Head of caudate nucleus (tissue), 42 donors: ENCODE measurements at regions of chr1 and their contacts with region 1.

Region 1: GRCh38 chr1:245045087-245045881 is 109.5 kb upstream of the KIF26B start:
- DNase-seq: peak in 16 of 42 donors; percentile 17 to 69 (median 35)

Region 2: GRCh38 chr1:244796718-244797406 is 248.4 kb before region 1 on chr1:
- intact Hi-C with region 1: loop called (anchors 5 kb)
- DNase-seq: peak in 40 of 42 donors; percentile 18 to 93 (median 78)

Region 3: GRCh38 chr1:244864253-244865027 is 180.8 kb before region 1 on chr1 and contains the start of gene HNRNPU:
- intact Hi-C with region 1: loop called (anchors 10 kb)
- DNase-seq: peak; percentile 89 to 99 (median 97)

Region 4: DNA sequence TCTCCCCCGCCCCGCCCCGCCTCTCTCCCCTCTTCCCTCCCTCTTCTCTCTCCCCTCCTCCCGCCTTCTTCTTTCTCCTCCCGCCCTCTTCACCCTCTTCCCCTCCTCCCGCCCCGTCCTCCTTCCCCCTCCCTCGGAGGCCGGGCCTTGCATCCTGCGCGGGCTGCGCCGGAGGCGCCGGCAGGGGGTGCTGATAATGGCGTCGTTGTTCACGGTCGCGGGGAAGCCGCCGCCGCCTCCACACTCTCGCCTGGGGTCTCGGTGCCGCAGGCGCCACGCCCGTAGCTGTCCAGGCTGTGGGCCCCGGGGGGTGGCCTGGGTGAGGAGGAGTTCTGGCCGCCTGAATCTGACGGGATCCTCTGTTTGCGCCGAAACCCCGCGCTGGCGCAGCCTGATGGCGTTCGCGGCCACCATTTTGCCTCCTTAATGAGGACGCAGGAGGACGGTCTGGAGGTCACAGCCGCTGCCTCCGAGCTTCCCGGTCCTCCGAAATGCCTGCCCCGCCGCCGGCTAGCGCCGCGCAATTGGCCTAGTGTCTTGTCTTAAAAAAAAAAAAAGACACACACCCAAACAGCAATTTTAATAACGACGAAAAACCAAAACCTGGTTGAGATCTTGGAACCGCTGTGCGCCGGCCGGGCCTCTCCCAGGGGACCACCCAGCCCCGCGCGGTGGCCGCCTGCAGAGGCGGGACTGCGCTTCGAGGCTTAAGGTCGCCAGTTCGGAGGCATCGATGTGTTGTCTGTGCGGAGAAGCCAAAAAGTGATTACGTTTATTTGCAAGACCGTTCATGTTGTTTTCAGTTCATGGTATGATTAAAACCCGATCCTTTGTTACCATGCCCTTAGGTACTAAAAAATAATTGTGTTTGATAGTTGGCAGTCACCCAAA is 74.4 kb before region 1 on chr1:
- intact Hi-C with region 1: loop called (anchors 10 kb)
- DNase-seq: peak; percentile 86 to 98 (median 96)